Activated CD4-positive, alpha-beta T cell treated with anti-CD3 and anti-CD28 coated beads for 36 hours (primary cell): ENCODE measurements at regions of chr6 and their contacts with region 1.

Region 1: GRCh38 chr6:14734416-14735340 is 511.2 kb upstream of the JARID2 start:
- DNase-seq: peak; percentile 55
- ATAC-seq: peak; percentile 37
- H3K4me3 Mint-ChIP-seq: peak overlapping the region; percentile 67
- H3K27ac Mint-ChIP-seq: peak overlapping the region; percentile 100
- H3K4me1 Mint-ChIP-seq: peaks cover 99% of the 10 kb centered on the region
- H3K27me3 Mint-ChIP-seq: no peaks in the 10 kb centered on the region

Region 2: DNA sequence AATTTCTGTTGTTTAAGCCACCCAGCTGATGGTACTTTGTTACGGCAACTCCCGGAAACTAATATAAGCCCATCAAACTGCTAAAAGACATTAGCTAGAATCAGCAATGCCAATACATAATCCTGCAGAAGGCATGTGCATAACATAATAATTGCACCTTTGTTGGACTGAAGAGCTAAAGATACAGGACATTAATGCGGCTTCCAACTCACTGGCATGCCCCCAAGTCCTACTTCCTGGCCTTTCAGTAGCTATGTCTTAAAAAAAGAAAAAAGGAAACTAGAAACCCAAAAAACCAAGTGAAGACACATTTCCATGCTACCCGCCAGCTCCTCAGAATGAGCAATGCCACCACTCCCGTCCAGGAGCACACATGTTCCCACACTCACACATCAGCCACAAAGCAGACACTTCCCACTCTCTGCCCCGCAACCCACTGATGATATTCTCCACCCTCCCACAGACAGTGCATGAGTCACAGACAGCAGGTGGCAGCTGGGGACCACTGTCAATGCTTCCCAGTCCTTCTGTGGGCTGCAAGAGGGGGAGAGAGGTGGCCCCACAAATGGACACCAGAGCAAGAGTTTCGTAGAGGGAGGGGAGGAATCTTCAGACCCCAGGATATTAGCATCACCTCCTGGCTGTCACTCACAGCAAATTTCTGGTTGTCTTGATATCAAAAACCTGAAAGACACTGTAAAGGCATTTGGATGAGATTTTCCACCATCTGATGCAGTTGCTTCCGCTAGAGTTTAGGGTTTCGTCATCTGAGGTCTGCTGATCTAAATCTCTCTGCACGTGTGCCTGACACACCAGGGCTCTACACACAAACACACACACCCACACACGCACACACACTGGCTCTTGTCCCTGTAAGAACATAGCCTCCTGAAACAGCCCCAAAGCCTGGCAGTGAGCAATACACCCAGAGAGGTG is 1280.1 kb before region 1 on chr6:
- CTCF ChIA-PET with region 1: no interaction called
- POLR2A ChIA-PET with region 1: no interaction called
- intact Hi-C with region 1: loop called in 1 of 2 experiments (anchors 10 kb)
- DNase-seq: peak; percentile 88
- ATAC-seq: peak; percentile 66
- H3K4me3 Mint-ChIP-seq: peak overlapping the region; percentile 36
- H3K27ac Mint-ChIP-seq: peak overlapping the region; percentile 95
- H3K4me1 Mint-ChIP-seq: peaks cover 63% of the 10 kb centered on the region
- H3K27me3 Mint-ChIP-seq: no peaks in the 10 kb centered on the region

Region 3: GRCh38 chr6:14452567-14453527 is 281.8 kb before region 1 on chr6:
- CTCF ChIA-PET with region 1: no interaction called
- POLR2A ChIA-PET with region 1: interaction called, 3 read pairs
- intact Hi-C with region 1: loop called (anchors 2 kb)
- DNase-seq: peak; percentile 85
- ATAC-seq: peak; percentile 70
- H3K4me3 Mint-ChIP-seq: peak overlapping the region; percentile 26
- H3K27ac Mint-ChIP-seq: peak overlapping the region; percentile 83
- H3K4me1 Mint-ChIP-seq: peaks cover 89% of the 10 kb centered on the region
- H3K27me3 Mint-ChIP-seq: no peaks in the 10 kb centered on the region

Region 4: GRCh38 chr6:14488180-14488579 is 246.5 kb before region 1 on chr6:
- CTCF ChIA-PET with region 1: no interaction called
- POLR2A ChIA-PET with region 1: no interaction called
- intact Hi-C with region 1: no loop called
- DNase-seq: no peak
- ATAC-seq: no peak
- H3K4me3 Mint-ChIP-seq: no peak overlapping the region
- H3K27ac Mint-ChIP-seq: no peak overlapping the region
- H3K4me1 Mint-ChIP-seq: peaks cover 1% of the 10 kb centered on the region
- H3K27me3 Mint-ChIP-seq: no peaks in the 10 kb centered on the region

Region 5: DNA sequence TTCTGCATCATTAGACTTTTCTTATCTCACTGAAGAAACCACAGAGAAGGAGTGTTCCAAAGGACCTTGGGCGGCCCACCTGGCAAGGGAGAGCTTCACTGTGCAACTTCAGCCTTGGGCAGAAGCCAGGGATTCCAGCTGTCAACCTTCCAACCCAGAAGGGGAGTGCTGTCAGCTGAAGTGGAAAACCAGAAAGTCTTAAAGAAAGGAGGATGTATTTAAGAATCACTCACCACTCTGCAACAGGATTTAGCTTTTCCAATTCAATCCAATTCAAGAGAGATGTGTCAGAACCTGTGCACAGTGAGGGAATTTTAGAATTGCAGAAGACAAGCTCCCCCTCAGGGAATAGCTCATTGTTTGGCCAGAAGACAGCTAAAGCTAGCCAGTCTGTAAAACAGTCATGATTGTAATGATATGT is 63.4 kb before region 1 on chr6:
- CTCF ChIA-PET with region 1: interaction called, 4 read pairs
- POLR2A ChIA-PET with region 1: no interaction called
- intact Hi-C with region 1: loop called (anchors 2 kb)
- DNase-seq: no peak
- ATAC-seq: no peak
- H3K4me3 Mint-ChIP-seq: no peak overlapping the region
- H3K27ac Mint-ChIP-seq: no peak overlapping the region
- H3K4me1 Mint-ChIP-seq: peaks cover 42% of the 10 kb centered on the region
- H3K27me3 Mint-ChIP-seq: no peaks in the 10 kb centered on the region

Region 6: GRCh38 chr6:14765106-14765505 is 30.4 kb after region 1 on chr6:
- CTCF ChIA-PET with region 1: no interaction called
- POLR2A ChIA-PET with region 1: no interaction called
- intact Hi-C with region 1: no loop called
- DNase-seq: no peak
- ATAC-seq: peak; percentile 26
- H3K4me3 Mint-ChIP-seq: no peak overlapping the region
- H3K27ac Mint-ChIP-seq: no peak overlapping the region
- H3K4me1 Mint-ChIP-seq: peaks cover 29% of the 10 kb centered on the region
- H3K27me3 Mint-ChIP-seq: no peaks in the 10 kb centered on the region

Region 7: GRCh38 chr6:14804785-14805210 is 70.1 kb after region 1 on chr6:
- CTCF ChIA-PET with region 1: no interaction called
- POLR2A ChIA-PET with region 1: no interaction called
- intact Hi-C with region 1: no loop called
- DNase-seq: no peak
- ATAC-seq: no peak
- H3K4me3 Mint-ChIP-seq: no peak overlapping the region
- H3K27ac Mint-ChIP-seq: no peak overlapping the region
- H3K4me1 Mint-ChIP-seq: no peaks in the 10 kb centered on the region
- H3K27me3 Mint-ChIP-seq: no peaks in the 10 kb centered on the region

Region 8: DNA sequence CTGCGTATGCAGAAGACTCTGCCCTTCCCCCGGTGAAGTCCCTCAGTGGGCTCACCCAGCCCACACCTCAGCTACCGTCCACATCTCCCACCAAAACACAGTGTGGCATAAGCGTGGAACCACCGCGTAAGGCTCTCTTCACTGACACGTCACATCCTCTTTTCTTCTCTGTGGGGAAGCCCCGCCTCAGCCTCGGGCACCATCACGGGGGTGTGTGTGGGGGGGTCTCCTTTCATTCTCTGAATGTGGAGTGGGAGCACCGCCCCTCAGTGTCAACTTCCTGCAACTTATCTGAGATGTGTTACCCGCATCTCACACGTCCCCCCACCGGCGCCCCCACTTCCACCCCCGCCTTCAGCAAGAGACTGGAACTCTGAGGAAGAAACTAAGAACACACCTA is 122.8 kb after region 1 on chr6:
- CTCF ChIA-PET with region 1: interaction called, 3 read pairs
- POLR2A ChIA-PET with region 1: interaction called, 4 read pairs
- intact Hi-C with region 1: loop called in 1 of 2 experiments (anchors 2 kb)
- DNase-seq: peak; percentile 80
- ATAC-seq: peak; percentile 71
- H3K4me3 Mint-ChIP-seq: peak overlapping the region; percentile 7
- H3K27ac Mint-ChIP-seq: peak overlapping the region; percentile 95
- H3K4me1 Mint-ChIP-seq: peaks cover 48% of the 10 kb centered on the region
- H3K27me3 Mint-ChIP-seq: no peaks in the 10 kb centered on the region

Region 9: GRCh38 chr6:15090145-15090579 is 355.5 kb after region 1 on chr6:
- CTCF ChIA-PET with region 1: no interaction called
- POLR2A ChIA-PET with region 1: no interaction called
- intact Hi-C with region 1: no loop called
- DNase-seq: no peak
- ATAC-seq: no peak
- H3K4me3 Mint-ChIP-seq: no peak overlapping the region
- H3K27ac Mint-ChIP-seq: no peak overlapping the region
- H3K4me1 Mint-ChIP-seq: no peaks in the 10 kb centered on the region
- H3K27me3 Mint-ChIP-seq: peaks cover 2% of the 10 kb centered on the region

Region 10: DNA sequence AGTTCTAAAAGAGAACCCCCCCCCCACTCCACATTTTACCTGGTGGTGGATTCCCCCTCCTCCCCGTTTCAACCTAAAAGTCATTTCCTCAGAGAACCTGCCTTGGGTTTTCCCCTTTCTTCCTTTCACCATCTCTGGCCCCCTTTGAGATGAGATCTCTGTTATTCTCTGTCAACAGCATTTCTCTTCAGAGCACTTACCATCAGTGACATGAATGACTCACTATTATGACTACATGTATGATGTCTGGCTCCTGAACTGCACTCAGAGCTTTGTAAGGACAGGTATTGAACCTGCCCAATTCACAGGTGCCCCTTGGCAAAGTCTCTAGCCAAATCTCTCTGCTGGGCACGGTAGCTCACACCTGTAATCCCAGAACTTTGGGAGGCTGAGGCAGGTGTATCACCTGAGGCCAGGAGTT is 449.8 kb after region 1 on chr6:
- CTCF ChIA-PET with region 1: no interaction called
- POLR2A ChIA-PET with region 1: interaction called, 3 read pairs
- intact Hi-C with region 1: loop called (anchors 2 kb)
- DNase-seq: peak; percentile 62
- ATAC-seq: peak; percentile 98
- H3K4me3 Mint-ChIP-seq: peak overlapping the region; percentile 23
- H3K27ac Mint-ChIP-seq: peak overlapping the region; percentile 96
- H3K4me1 Mint-ChIP-seq: peaks cover 23% of the 10 kb centered on the region
- H3K27me3 Mint-ChIP-seq: no peaks in the 10 kb centered on the region